Mammary epithelial cell (primary cell): ENCODE measurements at regions of chr5 and their contacts with region 1.

Region 1: GRCh38 chr5:41270423-41271251 is 57.3 kb upstream of the C6 start:
- DNase-seq: peak; percentile 34
- H3K4me3 ChIP-seq: no peak overlapping the region
- H3K27ac ChIP-seq: no peak overlapping the region
- H3K4me1 ChIP-seq: no peaks in the 10 kb centered on the region
- H3K27me3 ChIP-seq: no peaks in the 10 kb centered on the region
- CTCF ChIP-seq: peak; percentile 68 to 83

Region 2: DNA sequence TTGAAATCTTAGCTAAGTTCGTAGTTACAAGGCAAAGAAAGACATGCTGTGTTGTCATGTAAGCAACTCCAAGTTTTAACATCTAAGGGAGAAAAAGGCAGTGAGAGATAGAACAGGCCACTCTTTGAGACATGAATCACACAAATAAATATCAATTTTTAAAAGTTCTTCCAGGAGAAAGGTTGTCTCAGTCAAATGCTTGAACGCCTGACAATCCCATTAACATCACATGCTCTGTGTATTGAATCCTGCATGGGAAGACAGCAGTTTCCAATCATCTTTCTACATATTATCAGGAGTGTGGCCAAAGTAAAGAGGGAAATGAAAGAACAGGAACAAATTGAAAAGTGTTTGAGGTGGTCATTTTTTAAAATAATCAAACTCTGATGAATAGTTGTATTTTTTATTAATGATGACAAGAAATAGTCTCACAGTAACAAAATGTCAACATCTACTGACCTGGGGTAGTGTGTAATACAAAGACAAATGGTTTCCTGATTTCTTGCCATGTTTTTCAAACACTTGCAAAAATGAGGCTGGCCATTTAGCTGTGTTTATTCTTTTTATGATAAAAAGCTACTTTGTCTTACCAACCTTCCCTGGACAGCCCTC is 50.9 kb before region 1 on chr5:
- CTCF ChIA-PET with region 1: no interaction called
- dilution Hi-C with region 1: no loop called
- in situ Hi-C with region 1: no loop called
- intact Hi-C with region 1: no loop called
- DNase-seq: no peak
- H3K4me3 ChIP-seq: no peak overlapping the region
- H3K27ac ChIP-seq: no peak overlapping the region
- H3K4me1 ChIP-seq: no peaks in the 10 kb centered on the region
- H3K27me3 ChIP-seq: no peaks in the 10 kb centered on the region
- CTCF ChIP-seq: no peak

Region 3: GRCh38 chr5:41524174-41524573 is 253.5 kb after region 1 on chr5:
- CTCF ChIA-PET with region 1: no interaction called
- dilution Hi-C with region 1: no loop called
- in situ Hi-C with region 1: no loop called
- intact Hi-C with region 1: loop called (anchors 1 kb)
- DNase-seq: no peak
- H3K4me3 ChIP-seq: no peak overlapping the region
- H3K27ac ChIP-seq: no peak overlapping the region
- H3K4me1 ChIP-seq: peaks cover 8% of the 10 kb centered on the region
- H3K27me3 ChIP-seq: no peaks in the 10 kb centered on the region
- CTCF ChIP-seq: peak; percentile 19 to 44

Region 4: DNA sequence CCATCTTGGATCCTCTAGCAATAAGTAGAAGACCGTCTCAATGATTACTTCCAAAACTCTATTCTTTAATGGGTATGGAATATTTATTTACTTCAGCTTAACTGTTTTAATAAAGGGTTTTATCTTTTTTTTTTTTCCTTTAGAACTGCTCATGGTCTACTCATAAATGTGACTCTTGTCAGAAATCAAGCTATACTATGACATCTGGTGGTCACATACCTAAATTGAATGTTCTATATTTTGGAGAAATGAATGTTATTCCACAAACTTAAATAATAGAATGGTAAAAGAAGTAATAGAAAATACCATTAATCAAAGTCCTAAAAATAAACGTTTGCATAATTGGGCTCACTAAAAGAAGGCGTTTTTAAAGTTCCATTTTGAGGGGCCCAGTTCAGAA is 371.0 kb after region 1 on chr5:
- CTCF ChIA-PET with region 1: no interaction called
- dilution Hi-C with region 1: no loop called
- in situ Hi-C with region 1: no loop called
- intact Hi-C with region 1: loop called (anchors 2 kb)
- DNase-seq: no peak
- H3K4me3 ChIP-seq: no peak overlapping the region
- H3K27ac ChIP-seq: no peak overlapping the region
- H3K4me1 ChIP-seq: no peaks in the 10 kb centered on the region
- H3K27me3 ChIP-seq: no peaks in the 10 kb centered on the region
- CTCF ChIP-seq: peak in 1 of 2 donors; percentile 21